ENCODE measurements at regions of chr9 and their contacts with region 1.

Region 1: GRCh38 chr9:19174127-19174912 is 47.0 kb upstream of the PLIN2 start:
- DNase-seq: peak; percentile 68
- H3K4me3 ChIP-seq: no peak overlapping the region
- H3K27ac ChIP-seq: no peak overlapping the region
- H3K4me1 ChIP-seq: peaks cover 15% of the 10 kb centered on the region
- H3K27me3 ChIP-seq: no peaks in the 10 kb centered on the region
- CTCF ChIP-seq: peak; percentile 40 to 47
- POLR2A ChIP-seq: no peak

Region 2: GRCh38 chr9:17810728-17811571 is 1363.4 kb before region 1 on chr9:
- CTCF ChIA-PET with region 1: interaction called, 10 read pairs
- POLR2A ChIA-PET with region 1: no interaction called
- dilution Hi-C with region 1: no loop called
- intact Hi-C with region 1: no loop called
- DNase-seq: peak; percentile 59
- H3K4me3 ChIP-seq: no peak overlapping the region
- H3K27ac ChIP-seq: no peak overlapping the region
- H3K4me1 ChIP-seq: no peaks in the 10 kb centered on the region
- H3K27me3 ChIP-seq: peaks cover 8 to 9% of the 10 kb centered on the region in 2 experiments
- CTCF ChIP-seq: peak; percentile 63 to 69
- POLR2A ChIP-seq: no peak

Region 3: GRCh38 chr9:19048966-19049916 is 125.1 kb before region 1 on chr9 and contains the start of gene RRAGA:
- CTCF ChIA-PET with region 1: interaction called, 82 read pairs
- POLR2A ChIA-PET with region 1: interaction called, 5 read pairs
- dilution Hi-C with region 1: no loop called
- intact Hi-C with region 1: loop called (anchors 1 kb)
- DNase-seq: peak; percentile 97
- H3K4me3 ChIP-seq: peak within 1 kb of the TSS; percentile 48 to 76 (median 53)
- H3K27ac ChIP-seq: peak within 1 kb of the TSS; percentile 69
- H3K4me1 ChIP-seq: peaks cover 16% of the 10 kb centered on the region
- H3K27me3 ChIP-seq: no peaks in the 10 kb centered on the region
- CTCF ChIP-seq: peak; percentile 81 to 91
- POLR2A ChIP-seq: peak; percentile 97
- total RNA-seq, gene RRAGA: 78.5 and 81.2 TPM in 2 replicates

Region 4: DNA sequence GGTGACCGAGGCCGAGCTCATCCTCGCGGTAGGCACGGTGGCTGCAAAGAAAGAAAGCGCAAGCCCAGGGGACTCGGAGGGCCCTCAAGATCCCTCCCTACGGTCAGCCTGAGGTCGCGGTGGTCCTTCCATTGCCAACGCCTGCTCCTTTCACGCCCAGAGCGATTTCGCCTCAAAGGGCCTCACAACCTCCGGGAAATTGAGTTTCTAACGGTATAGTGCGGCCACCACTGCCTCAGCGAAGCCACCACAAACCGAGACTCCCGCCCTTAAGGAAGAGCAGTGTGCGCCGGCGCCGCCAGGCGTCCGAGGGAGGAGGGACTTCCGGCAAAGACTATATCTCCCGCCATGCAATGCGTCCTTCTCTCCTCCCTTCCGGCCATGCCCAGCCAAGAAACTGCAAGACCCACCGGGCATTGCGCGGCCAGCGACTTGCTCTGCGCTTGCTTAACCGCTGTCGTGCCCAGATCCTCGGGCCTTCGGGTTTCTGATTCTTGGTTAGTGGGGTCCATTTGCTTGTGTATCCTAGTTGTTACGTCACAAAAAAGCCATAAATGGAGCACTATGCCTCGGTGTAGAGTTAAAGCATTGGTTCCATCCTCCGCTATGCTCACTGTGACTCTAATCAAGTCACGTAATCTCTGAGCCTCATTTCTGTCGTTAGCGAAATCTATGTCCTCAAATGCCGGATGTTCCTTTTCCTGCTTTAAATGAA is 71.5 kb before region 1 on chr9 and contains the start of gene HAUS6:
- CTCF ChIA-PET with region 1: interaction called, 18 read pairs
- POLR2A ChIA-PET with region 1: no interaction called
- dilution Hi-C with region 1: no loop called
- intact Hi-C with region 1: loop called (anchors 1 kb)
- DNase-seq: peak; percentile 98
- H3K4me3 ChIP-seq: peak within 1 kb of the TSS; percentile 85 to 93 (median 87)
- H3K27ac ChIP-seq: peak within 1 kb of the TSS; percentile 52
- H3K4me1 ChIP-seq: peaks cover 8% of the 10 kb centered on the region
- H3K27me3 ChIP-seq: no peaks in the 10 kb centered on the region
- CTCF ChIP-seq: peak; percentile 7 to 63
- POLR2A ChIP-seq: peak; percentile 85
- total RNA-seq, gene HAUS6: 18.9 and 19.6 TPM in 2 replicates

Region 5: GRCh38 chr9:19122490-19123042 is 51.8 kb before region 1 on chr9:
- CTCF ChIA-PET with region 1: interaction called, 25 read pairs
- POLR2A ChIA-PET with region 1: no interaction called
- dilution Hi-C with region 1: no loop called
- intact Hi-C with region 1: loop called (anchors 1 kb)
- DNase-seq: no peak
- H3K4me3 ChIP-seq: no peak overlapping the region
- H3K27ac ChIP-seq: no peak overlapping the region
- H3K4me1 ChIP-seq: peaks cover 32% of the 10 kb centered on the region
- H3K27me3 ChIP-seq: no peaks in the 10 kb centered on the region
- CTCF ChIP-seq: peak in 1 of 2 donors; percentile 4
- POLR2A ChIP-seq: no peak

Region 6: DNA sequence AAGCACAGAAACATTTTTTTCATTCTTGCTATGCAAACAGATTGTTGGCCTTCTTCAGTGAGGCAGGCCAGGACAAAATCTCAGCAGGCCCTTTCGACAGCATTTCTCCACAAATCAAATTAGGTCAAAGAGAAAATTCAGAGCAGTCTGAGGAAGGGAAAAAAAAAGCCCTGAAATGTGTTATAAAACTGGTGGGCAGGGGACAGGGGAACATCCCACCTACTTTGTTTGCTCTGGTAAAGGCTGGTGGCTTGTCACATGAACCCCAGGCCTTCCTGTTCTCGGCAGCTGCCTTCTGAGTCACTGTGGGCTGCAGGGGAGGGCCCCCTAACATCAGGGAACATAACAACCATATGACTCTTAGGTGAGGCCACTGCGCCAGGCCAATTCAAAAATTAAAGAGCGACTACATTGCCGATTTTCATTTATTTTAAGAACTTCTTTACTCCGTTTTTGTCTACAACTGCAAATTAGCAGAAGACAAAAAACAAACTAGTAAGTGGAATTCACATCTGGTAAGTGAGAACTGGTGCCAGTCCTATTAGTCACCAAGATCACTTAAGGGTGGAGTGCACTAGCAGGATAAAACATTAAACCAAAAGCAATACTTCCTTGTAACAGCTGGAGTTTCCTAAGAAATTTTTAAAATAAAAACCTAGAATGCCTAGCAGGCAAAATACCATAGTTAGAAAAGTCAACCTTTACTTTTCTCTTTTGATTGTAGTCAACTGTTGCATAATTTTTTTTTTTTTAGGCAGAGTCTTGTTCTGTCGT is 10.0 kb after region 1 on chr9:
- CTCF ChIA-PET with region 1: interaction called, 22 read pairs
- POLR2A ChIA-PET with region 1: no interaction called
- dilution Hi-C with region 1: no loop called
- intact Hi-C with region 1: no loop called
- DNase-seq: peak; percentile 92
- H3K4me3 ChIP-seq: no peak overlapping the region
- H3K27ac ChIP-seq: peak overlapping the region; percentile 96
- H3K4me1 ChIP-seq: peaks cover 32% of the 10 kb centered on the region
- H3K27me3 ChIP-seq: no peaks in the 10 kb centered on the region
- CTCF ChIP-seq: no peak
- POLR2A ChIP-seq: no peak

Measured in endothelial cell of umbilical vein (primary cell).